Esophagus muscularis mucosa (tissue), 4 donors: ENCODE measurements at regions of chrX and their contacts with region 1.

Region 1: DNA sequence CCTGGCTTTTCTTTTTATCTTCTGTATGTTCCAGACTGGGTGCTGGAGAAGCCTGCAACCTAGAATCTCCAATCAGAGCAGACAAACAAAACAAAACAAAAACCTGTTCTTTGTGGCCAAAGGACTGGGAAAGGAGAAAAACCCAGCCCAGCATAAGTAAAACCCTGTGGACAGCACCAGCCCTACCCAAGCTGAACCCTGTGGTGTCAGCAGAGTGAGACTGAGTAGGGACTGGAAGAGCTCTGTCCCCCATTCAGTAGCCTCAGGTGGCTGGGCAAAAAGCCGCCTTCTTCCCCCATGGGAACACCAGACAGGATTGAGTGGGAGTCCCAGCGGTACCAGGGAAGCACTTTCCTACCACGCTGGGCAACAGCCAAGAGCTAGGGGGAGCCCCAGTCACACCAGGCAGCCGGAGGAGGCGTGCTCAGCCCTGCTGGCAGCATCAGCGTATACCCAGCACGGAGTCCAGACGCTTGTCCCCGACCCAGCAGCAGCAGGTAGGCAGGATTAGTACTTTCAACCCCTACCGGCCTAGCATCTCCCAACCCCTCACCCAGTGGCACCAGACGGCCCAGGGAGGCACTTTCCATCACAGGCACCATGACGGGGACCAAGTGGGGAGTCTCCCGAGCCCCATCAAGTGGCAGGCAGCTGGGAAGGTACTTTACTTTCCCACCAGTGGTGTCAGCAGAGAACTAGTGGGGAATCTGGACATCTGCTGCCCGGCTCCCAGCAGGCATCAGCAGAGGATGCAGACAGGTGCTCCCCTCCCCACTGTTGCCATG is 8.6 kb upstream of the JADE3 start:
- DNase-seq: peak; percentile 91
- H3K4me3 ChIP-seq: peak overlapping the region; percentile 50 to 63 (median 51)
- H3K27ac ChIP-seq: peak overlapping the region in 2 of 4 donors; percentile 20 to 49
- H3K4me1 ChIP-seq: peaks cover 0 to 4% (median 2%) of the 10 kb centered on the region in 4 donors
- H3K27me3 ChIP-seq: no peaks in the 10 kb centered on the region
- CTCF ChIP-seq: peak; percentile 55 to 64 (median 58)
- EP300 ChIP-seq: no peak
- POLR2A ChIP-seq: no peak

Region 2: DNA sequence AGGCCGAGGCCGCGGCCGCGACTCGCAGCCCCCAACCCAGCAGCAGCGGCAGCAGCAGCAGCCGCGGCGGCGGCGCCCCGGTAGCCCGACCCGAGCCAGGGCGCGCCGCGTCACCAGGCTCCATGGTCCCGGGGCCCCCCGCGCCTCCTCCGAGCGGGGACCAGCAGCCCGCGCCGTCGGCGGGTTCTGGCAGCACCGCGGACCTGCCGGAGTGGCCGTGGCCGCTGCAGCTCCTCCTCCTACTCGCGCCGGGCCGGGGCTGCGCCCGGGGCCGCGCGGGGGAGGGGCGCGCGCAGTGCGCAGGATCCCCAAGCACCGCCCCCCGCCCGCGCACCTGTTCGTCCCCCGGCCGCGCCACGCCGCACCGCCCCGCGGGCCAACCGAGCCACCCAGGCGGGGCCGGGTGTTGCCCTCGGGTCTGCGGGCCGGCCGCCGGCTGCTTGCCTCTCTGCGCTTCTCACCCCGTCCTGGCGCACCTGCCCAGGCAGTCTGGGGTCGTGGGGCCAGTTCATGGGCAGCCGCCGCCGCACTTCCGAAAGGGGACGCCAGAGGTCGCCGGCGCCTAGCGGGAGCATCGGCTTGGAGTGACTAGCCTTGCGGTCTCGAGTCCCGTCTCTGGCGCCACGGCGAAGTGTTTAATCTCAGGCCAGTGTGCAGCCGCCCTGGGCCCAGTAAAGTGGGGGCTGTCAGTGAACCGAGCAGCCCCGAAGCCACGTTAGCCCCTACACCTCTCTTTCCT is 144.6 kb before region 1 on chrX and contains the start of gene SLC9A7:
- intact Hi-C with region 1: no loop called
- DNase-seq: no peak
- H3K4me3 ChIP-seq: peak within 1 kb of the TSS; percentile 55 to 62 (median 57)
- H3K27ac ChIP-seq: peak within 1 kb of the TSS in 3 of 4 donors; percentile 33 to 48 (median 38)
- H3K4me1 ChIP-seq: peaks cover 4 to 15% (median 7%) of the 10 kb centered on the region in 4 donors
- H3K27me3 ChIP-seq: no peaks in the 10 kb centered on the region
- CTCF ChIP-seq: peak; percentile 72 to 86 (median 73)
- EP300 ChIP-seq: no peak
- POLR2A ChIP-seq: no peak
- total RNA-seq, gene SLC9A7: 2.8 to 10.7 (median 3.3) TPM

Region 3: GRCh38 chrX:46836701-46837557 is 66.7 kb before region 1 on chrX and contains the start of gene RP2:
- intact Hi-C with region 1: loop called (anchors 10 kb)
- DNase-seq: peak; percentile 97
- H3K4me3 ChIP-seq: peak within 1 kb of the TSS; percentile 68 to 84 (median 73)
- H3K27ac ChIP-seq: peak within 1 kb of the TSS; percentile 86 to 92 (median 89)
- H3K4me1 ChIP-seq: peaks cover 0 to 36% (median 27%) of the 10 kb centered on the region in 4 donors
- H3K27me3 ChIP-seq: no peaks in the 10 kb centered on the region
- CTCF ChIP-seq: peak in 2 of 3 experiments; percentile 19 to 22
- EP300 ChIP-seq: no peak
- POLR2A ChIP-seq: peak; percentile 53
- total RNA-seq, gene RP2: 7.2 to 10.6 (median 9.4) TPM

Region 4: DNA sequence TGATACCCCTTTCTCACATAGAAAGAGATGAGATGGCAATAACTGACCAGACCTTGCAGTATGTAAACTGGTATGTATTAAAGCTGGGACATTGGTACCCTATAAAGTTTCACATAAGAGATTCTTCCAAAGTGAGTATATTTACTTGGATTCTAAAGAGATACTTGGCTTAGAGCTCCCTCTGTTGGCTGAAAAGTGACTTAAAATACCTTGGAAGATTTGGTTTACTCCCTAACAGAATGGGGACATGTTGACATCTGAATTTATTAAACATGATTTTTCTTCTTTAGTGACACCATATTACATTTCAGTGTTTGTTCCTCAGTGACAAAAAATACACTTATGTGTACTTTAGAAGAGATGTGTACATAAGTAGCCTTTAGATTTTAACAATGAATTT is 126.7 kb after region 1 on chrX:
- intact Hi-C with region 1: loop called (anchors 2 kb)
- DNase-seq: no peak
- H3K4me3 ChIP-seq: no peak overlapping the region
- H3K27ac ChIP-seq: no peak overlapping the region
- H3K4me1 ChIP-seq: no peaks in the 10 kb centered on the region
- H3K27me3 ChIP-seq: no peaks in the 10 kb centered on the region
- CTCF ChIP-seq: peak; percentile 53 to 57 (median 54)
- EP300 ChIP-seq: no peak
- POLR2A ChIP-seq: no peak

Region 5: GRCh38 chrX:47047989-47048388 is 144.3 kb after region 1 on chrX:
- intact Hi-C with region 1: no loop called
- DNase-seq: no peak
- H3K4me3 ChIP-seq: no peak overlapping the region
- H3K27ac ChIP-seq: no peak overlapping the region
- H3K4me1 ChIP-seq: no peaks in the 10 kb centered on the region
- H3K27me3 ChIP-seq: no peaks in the 10 kb centered on the region
- CTCF ChIP-seq: no peak
- EP300 ChIP-seq: no peak
- POLR2A ChIP-seq: no peak